ENCODE measurements at regions of chr7 and their contacts with region 1.

Region 1: GRCh38 chr7:4791738-4792536 is 16.5 kb downstream of the AP5Z1 start:
- DNase-seq: peak; percentile 68 to 88 (median 81)
- ATAC-seq: peak; percentile 89
- H3K4me3 ChIP-seq: peak overlapping the region; percentile 48 to 59
- H3K4me3 Mint-ChIP-seq: no peak overlapping the region
- H3K27ac ChIP-seq: no peak overlapping the region
- H3K27ac Mint-ChIP-seq: no peak overlapping the region
- H3K4me1 ChIP-seq: peaks cover 5% of the 10 kb centered on the region
- H3K4me1 Mint-ChIP-seq: peaks cover 3% of the 10 kb centered on the region
- H3K27me3 ChIP-seq: no peaks in the 10 kb centered on the region
- H3K27me3 Mint-ChIP-seq: no peaks in the 10 kb centered on the region
- CTCF ChIP-seq: peak; percentile 47

Region 2: GRCh38 chr7:4775250-4775847 is 16.6 kb before region 1 on chr7 and contains the start of gene AP5Z1:
- CTCF ChIA-PET with region 1: interaction called, 4 read pairs
- POLR2A ChIA-PET with region 1: interaction called, 31 read pairs
- intact Hi-C with region 1: loop called (anchors 1 to 2 kb)
- DNase-seq: peak; percentile 90 to 99 (median 95)
- ATAC-seq: peak; percentile 93
- H3K4me3 ChIP-seq: peak within 1 kb of the TSS; percentile 80 to 98
- H3K4me3 Mint-ChIP-seq: peak within 1 kb of the TSS; percentile 99
- H3K27ac ChIP-seq: peak within 1 kb of the TSS; percentile 93 to 94
- H3K27ac Mint-ChIP-seq: peak within 1 kb of the TSS; percentile 99
- H3K4me1 ChIP-seq: peaks cover 25% of the 10 kb centered on the region
- H3K4me1 Mint-ChIP-seq: peaks cover 47% of the 10 kb centered on the region
- H3K27me3 ChIP-seq: no peaks in the 10 kb centered on the region
- H3K27me3 Mint-ChIP-seq: no peaks in the 10 kb centered on the region
- CTCF ChIP-seq: no peak
- total RNA-seq, gene AP5Z1: 129 to 131 TPM

Region 3: GRCh38 chr7:4888134-4888533 is 96.2 kb after region 1 on chr7:
- CTCF ChIA-PET with region 1: no interaction called
- POLR2A ChIA-PET with region 1: no interaction called
- intact Hi-C with region 1: no loop called
- DNase-seq: no peak
- ATAC-seq: no peak
- H3K4me3 ChIP-seq: no peak overlapping the region
- H3K4me3 Mint-ChIP-seq: no peak overlapping the region
- H3K27ac ChIP-seq: no peak overlapping the region
- H3K27ac Mint-ChIP-seq: no peak overlapping the region
- H3K4me1 ChIP-seq: no peaks in the 10 kb centered on the region
- H3K4me1 Mint-ChIP-seq: no peaks in the 10 kb centered on the region
- H3K27me3 ChIP-seq: no peaks in the 10 kb centered on the region
- H3K27me3 Mint-ChIP-seq: peaks cover 26% of the 10 kb centered on the region
- CTCF ChIP-seq: no peak